ENCODE measurements at regions of chr1 and their contacts with region 1.

Region 1: DNA sequence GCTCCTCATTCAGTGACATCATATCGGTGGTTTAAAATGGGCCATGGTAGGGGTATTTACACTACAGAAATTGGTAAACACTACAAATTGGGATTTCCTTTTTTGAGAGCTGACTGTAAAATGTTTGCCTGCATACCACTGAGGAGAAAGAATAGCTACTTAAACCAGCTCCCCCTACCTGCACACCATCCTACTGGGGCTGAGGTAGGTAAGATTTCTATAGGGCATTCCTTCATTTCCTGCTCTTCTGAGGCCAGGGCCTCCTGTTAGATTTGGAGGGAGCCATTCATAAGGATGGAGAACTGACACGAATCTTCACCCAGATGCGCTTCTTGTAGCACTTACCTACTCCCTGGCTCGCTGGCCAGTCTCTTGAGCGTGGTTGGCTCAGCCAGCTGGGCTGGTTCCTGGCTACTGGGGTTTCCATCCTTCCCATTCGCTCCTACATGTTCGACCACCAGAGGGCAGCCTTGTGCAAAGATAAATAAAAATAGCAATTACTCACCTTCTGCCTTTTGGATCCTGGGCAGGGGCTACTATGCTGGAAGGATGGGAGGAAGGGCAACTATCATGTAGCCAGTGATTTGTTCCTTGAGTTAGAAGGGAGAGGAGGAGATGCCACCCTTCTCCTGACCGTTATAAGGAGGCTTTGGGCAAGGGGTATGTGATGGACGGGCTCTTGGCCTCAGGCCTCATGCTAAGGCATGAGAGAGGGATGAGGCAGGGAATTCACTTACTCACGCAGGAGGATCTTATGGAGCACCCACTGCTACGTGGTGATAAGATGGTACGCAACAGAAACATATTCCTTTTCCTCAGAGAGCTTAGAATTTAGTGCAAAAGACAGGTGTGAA is 10.7 kb downstream of the OPTC start:
- DNase-seq: peak; percentile 45
- ATAC-seq: peak; percentile 57
- H3K4me3 Mint-ChIP-seq: no peak overlapping the region
- H3K27ac Mint-ChIP-seq: peak overlapping the region; percentile 10
- H3K4me1 Mint-ChIP-seq: peaks cover 2% of the 10 kb centered on the region
- H3K27me3 Mint-ChIP-seq: peaks cover 12% of the 10 kb centered on the region
- CTCF ChIP-seq: peak; percentile 83

Region 2: DNA sequence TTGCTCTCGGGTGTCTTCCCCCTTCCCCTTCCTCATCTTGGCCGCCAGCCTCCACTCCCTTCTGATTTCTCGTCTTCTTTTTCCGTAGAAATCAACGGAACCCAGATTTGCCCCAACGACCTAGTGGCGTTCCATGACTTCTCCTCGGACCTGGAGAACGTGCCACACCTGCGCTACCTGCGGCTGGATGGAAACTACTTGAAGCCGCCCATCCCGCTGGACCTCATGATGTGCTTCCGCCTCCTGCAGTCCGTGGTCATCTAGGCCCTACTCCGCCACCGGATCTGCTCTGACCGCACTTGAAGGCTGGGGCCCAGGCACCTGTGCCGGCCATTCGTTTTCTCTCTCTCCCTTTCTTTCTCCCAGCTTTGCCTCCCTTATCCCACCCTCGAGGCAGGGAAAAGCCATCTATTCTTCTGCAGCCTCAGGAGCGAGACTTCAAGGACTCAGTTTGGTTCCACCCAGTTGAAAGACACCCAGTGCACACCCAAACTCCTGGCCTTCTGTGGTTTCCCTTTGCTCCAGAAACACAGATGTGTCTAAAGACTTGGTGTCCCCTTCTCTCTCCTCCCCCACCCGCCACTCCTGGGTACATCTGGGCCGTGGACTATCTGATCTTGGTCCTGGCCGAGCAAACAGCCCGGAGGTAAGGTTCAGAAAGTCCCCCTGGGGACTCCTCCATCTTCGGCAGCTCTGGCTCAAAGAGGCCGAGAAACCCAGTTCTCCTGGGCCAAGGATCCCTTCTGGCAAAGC is 17.8 kb before region 1 on chr1:
- CTCF ChIA-PET with region 1: interaction called, 10 read pairs
- POLR2A ChIA-PET with region 1: no interaction called
- intact Hi-C with region 1: no loop called
- DNase-seq: no peak
- ATAC-seq: no peak
- H3K4me3 Mint-ChIP-seq: peak overlapping the region; percentile 83
- H3K27ac Mint-ChIP-seq: no peak overlapping the region
- H3K4me1 Mint-ChIP-seq: peaks cover 5% of the 10 kb centered on the region
- H3K27me3 Mint-ChIP-seq: peaks cover 2% of the 10 kb centered on the region
- CTCF ChIP-seq: no peak

Region 3: GRCh38 chr1:203526572-203526971 is 21.9 kb after region 1 on chr1:
- CTCF ChIA-PET with region 1: no interaction called
- POLR2A ChIA-PET with region 1: no interaction called
- intact Hi-C with region 1: no loop called
- DNase-seq: no peak
- ATAC-seq: no peak
- H3K4me3 Mint-ChIP-seq: no peak overlapping the region
- H3K27ac Mint-ChIP-seq: no peak overlapping the region
- H3K4me1 Mint-ChIP-seq: no peaks in the 10 kb centered on the region
- H3K27me3 Mint-ChIP-seq: no peaks in the 10 kb centered on the region
- CTCF ChIP-seq: no peak

Region 4: GRCh38 chr1:203572134-203572625 is 67.6 kb after region 1 on chr1:
- CTCF ChIA-PET with region 1: no interaction called
- POLR2A ChIA-PET with region 1: no interaction called
- intact Hi-C with region 1: no loop called
- DNase-seq: no peak
- ATAC-seq: no peak
- H3K4me3 Mint-ChIP-seq: no peak overlapping the region
- H3K27ac Mint-ChIP-seq: no peak overlapping the region
- H3K4me1 Mint-ChIP-seq: no peaks in the 10 kb centered on the region
- H3K27me3 Mint-ChIP-seq: peaks cover 6% of the 10 kb centered on the region
- CTCF ChIP-seq: no peak

Region 5: GRCh38 chr1:203776636-203777035 is 272.0 kb after region 1 on chr1:
- CTCF ChIA-PET with region 1: interaction called, 7 read pairs
- POLR2A ChIA-PET with region 1: no interaction called
- intact Hi-C with region 1: loop called (anchors 2 kb)
- DNase-seq: no peak
- ATAC-seq: peak; percentile 37
- H3K4me3 Mint-ChIP-seq: no peak overlapping the region
- H3K27ac Mint-ChIP-seq: no peak overlapping the region
- H3K4me1 Mint-ChIP-seq: peaks cover 12% of the 10 kb centered on the region
- H3K27me3 Mint-ChIP-seq: no peaks in the 10 kb centered on the region
- CTCF ChIP-seq: no peak